HCT116 (cell line): ENCODE measurements at regions of chr2 and their contacts with region 1.

Region 1: GRCh38 chr2:109591206-109591605 is 22.6 kb downstream of the SEPTIN10 start:
- DNase-seq: no peak
- ATAC-seq: no peak
- H3K4me3 ChIP-seq: no peak overlapping the region
- H3K27ac ChIP-seq: no peak overlapping the region
- H3K4me1 ChIP-seq: peaks cover 5 to 10% of the 10 kb centered on the region in 2 experiments
- H3K27me3 ChIP-seq: no peaks in the 10 kb centered on the region
- CTCF ChIP-seq: no peak
- POLR2A ChIP-seq: no peak
- RAD21 ChIP-seq: no peak

Region 2: DNA sequence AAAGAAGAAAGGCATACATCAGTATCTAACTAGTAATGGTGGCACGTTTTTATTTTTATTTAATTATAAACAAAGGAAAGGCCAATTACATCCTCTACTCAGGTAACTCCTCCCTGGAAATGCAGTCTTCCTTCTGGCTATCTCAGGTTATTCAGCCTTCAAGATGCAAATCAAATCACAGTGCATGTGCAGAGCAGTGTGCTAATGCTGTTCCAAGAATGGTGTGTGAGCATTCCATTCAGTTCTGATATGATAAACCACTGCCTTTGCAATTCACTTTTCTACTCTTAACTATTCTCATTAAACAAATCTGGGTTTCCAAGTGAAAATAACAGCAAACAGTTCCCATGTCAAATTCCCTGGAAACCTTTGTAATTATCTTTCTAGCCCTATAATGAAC is 15.8 kb before region 1 on chr2:
- CTCF ChIA-PET with region 1: no interaction called
- POLR2A ChIA-PET with region 1: no interaction called
- RAD21 ChIA-PET with region 1: no interaction called
- intact Hi-C with region 1: loop called (anchors 2 kb)
- DNase-seq: no peak
- ATAC-seq: no peak
- H3K4me3 ChIP-seq: no peak overlapping the region
- H3K27ac ChIP-seq: no peak overlapping the region
- H3K4me1 ChIP-seq: no peaks in the 10 kb centered on the region
- H3K27me3 ChIP-seq: no peaks in the 10 kb centered on the region
- CTCF ChIP-seq: no peak
- POLR2A ChIP-seq: no peak
- RAD21 ChIP-seq: no peak